AG04450 (cell line): ENCODE measurements at regions of chr14 and their contacts with region 1.

Region 1: DNA sequence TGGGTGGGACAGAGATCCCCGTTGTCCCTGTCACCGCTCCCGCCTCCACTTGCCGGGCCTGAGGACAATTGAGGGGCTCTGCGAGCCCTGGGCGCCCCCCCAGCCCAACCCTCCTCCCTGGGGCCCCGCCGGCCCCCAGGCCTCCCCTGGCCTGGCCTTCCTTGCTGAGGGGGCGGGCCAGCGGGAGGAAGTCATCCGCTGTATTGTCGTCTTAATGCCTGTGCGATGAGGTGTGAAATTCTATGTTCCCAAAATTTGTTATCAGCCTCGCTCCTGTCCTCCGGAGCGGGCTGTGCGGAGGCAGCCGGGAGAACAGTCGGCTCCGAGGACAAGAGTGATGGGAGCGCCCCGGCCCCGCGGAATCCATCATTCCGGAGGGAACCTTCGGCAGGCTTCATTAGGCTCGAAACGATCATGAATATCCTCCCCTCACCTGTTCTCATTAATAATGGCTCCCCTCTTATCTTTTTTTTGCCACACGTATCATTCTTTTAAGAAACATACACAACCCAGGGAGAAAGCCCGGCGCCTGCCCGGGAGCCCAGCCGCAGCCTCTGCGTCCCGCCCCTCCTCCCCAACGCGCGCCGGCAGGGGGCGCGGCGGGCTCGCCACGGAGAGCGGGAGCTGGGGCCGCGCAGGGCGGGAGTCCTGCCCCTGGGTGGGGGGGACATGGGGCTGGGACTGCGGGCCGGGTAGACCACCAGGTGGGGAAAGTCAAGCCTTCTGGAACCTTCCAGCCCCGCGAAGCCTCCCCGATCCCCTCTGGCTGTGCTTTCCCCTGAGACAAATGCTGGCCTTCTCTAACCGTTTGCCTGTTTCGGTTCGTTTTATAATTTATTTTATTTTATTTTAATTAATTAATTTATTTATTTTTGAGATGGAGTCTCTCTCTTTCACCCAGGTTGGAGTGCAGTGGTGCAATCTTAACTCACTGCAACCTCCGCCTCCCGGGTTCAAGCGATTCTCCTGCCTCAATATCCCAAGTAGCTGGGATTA is 17.1 kb upstream of the DLK1 start:
- DNase-seq: no peak
- H3K4me3 ChIP-seq: peak overlapping the region; percentile 44
- H3K27ac ChIP-seq: no peak overlapping the region
- H3K27me3 ChIP-seq: peaks cover 21% of the 10 kb centered on the region
- CTCF ChIP-seq: peak; percentile 63

Region 2: DNA sequence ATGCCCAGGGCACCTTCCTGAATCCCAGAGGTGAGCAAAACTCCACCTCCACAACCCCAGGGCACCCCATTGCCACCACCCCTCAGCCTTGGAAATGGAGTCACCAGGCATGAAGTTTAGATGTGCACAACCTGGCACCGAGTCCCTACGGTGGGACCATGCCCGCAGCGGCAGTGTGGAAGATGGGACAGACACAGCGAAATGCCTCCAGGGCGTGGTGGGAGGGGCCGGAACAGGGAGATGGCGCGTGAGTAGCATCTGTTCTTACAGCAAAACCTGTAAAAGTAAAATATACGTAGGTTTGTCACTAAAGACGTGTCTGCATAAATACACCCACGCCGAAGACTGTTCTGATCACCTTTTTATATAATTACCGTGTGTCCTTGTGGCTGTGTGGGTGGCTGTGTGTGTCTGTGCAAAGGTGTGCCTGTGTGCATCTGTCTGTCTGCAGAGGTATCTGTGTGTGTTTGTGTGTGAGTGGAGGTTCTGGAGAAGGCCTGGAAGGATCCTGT is 532.7 kb before region 1 on chr14:
- CTCF ChIA-PET with region 1: no interaction called
- POLR2A ChIA-PET with region 1: no interaction called
- DNase-seq: no peak
- H3K4me3 ChIP-seq: no peak overlapping the region
- H3K27ac ChIP-seq: no peak overlapping the region
- H3K27me3 ChIP-seq: peaks cover 24% of the 10 kb centered on the region
- CTCF ChIP-seq: no peak

Region 3: DNA sequence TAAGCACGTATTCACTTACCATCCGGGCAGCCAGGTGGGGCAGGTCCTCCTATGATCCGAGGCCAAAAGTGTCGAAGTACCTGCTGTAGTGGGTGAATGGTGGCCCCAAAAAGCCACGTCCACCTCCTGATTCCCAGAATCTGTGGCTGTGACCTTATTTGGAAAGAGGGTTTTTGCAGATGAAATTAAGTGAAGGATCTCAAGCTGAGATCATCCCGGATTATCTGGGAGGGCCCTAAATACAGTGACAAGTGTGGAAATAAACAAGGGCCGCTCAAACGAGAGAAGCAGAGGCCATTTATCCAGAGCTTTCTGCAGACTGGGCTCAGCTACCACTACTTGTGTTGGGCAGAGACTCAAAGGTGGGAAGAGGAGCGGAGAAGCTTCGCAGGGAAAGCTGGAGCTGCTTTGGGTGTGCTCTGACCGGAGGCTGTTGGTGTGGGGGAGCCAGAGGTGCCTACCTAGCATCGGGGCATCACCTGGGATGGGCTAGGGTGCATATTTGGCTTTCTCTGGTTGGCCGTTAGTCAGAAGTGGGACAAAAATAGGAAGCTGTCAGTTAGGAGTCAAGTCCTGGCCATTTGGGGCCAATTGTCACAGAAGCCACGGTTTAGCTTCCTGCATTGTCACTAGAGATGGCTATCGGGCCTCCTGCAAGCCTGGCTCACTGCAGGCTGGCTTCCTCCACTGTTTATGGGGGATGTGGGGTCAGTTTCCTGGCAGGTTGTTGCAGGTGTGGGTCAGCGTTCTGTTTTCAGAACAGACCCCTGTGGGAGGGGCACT is 10.7 kb before region 1 on chr14:
- CTCF ChIA-PET with region 1: interaction called, 12 read pairs
- POLR2A ChIA-PET with region 1: no interaction called
- DNase-seq: no peak
- H3K4me3 ChIP-seq: no peak overlapping the region
- H3K27ac ChIP-seq: no peak overlapping the region
- H3K27me3 ChIP-seq: peaks cover 24% of the 10 kb centered on the region
- CTCF ChIP-seq: no peak

Region 4: GRCh38 chr14:100723135-100723829 is 13.7 kb after region 1 on chr14:
- CTCF ChIA-PET with region 1: interaction called, 21 read pairs
- POLR2A ChIA-PET with region 1: no interaction called
- DNase-seq: no peak
- H3K4me3 ChIP-seq: no peak overlapping the region
- H3K27ac ChIP-seq: no peak overlapping the region
- H3K27me3 ChIP-seq: peaks cover 86% of the 10 kb centered on the region
- CTCF ChIP-seq: no peak

Region 5: GRCh38 chr14:101535232-101535631 is 825.6 kb after region 1 on chr14:
- CTCF ChIA-PET with region 1: no interaction called
- POLR2A ChIA-PET with region 1: no interaction called
- DNase-seq: no peak
- H3K4me3 ChIP-seq: no peak overlapping the region
- H3K27ac ChIP-seq: no peak overlapping the region
- H3K27me3 ChIP-seq: no peaks in the 10 kb centered on the region
- CTCF ChIP-seq: no peak